Activated CD4-positive, alpha-beta T cell treated with anti-CD3 and anti-CD28 coated beads for 36 hours (primary cell): ENCODE measurements at regions of chr2 and their contacts with region 1.

Region 1: DNA sequence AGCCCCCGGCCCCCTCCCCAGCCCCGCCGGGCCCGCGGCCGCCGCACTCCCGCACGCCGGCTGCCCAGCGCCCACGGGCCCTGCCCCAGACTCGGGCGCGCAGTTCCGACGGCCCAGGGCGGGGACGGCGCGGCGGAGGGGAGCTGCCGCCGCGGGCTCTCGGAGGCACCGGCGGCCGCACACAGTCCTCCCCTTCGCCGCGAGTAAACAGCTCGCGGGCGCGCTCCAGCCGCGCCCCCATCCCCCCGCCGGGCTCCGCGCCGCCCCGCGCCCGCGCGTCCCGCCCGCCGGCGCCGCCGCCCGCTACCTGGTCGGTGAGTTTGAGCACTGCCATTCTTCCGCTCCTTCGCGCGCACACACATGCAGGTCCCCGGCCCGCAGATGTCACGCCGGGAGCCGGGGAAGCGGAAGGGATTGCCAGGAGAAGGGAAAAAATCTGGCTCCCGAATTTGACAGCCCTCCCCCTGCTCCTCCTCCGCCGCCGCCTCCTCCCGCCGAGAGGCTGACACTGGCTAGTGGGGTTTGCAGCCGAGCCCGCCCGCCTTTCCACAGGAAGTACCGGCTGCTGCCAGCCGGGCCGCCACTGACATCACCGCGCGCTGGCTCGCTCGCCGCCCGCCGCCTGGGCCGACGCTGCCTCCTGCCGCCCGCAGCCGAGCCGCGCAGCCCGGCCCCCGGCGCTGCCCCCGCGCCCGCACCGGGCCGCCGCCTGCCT is at the start of gene ANKRD44:
- DNase-seq: peak; percentile 93
- ATAC-seq: peak; percentile 69
- H3K4me3 Mint-ChIP-seq: peak within 1 kb of the TSS; percentile 93
- H3K27ac Mint-ChIP-seq: peak within 1 kb of the TSS; percentile 98
- H3K4me1 Mint-ChIP-seq: peaks cover 67% of the 10 kb centered on the region
- H3K27me3 Mint-ChIP-seq: no peaks in the 10 kb centered on the region
- total RNA-seq, gene ANKRD44: 122 to 181 TPM

Region 2: GRCh38 chr2:196160101-196160500 is 1150.3 kb before region 1 on chr2:
- CTCF ChIA-PET with region 1: no interaction called
- POLR2A ChIA-PET with region 1: no interaction called
- intact Hi-C with region 1: loop called in 1 of 2 experiments (anchors 10 kb)
- DNase-seq: peak; percentile 73
- ATAC-seq: peak; percentile 45
- H3K4me3 Mint-ChIP-seq: peak overlapping the region; percentile 56
- H3K27ac Mint-ChIP-seq: peak overlapping the region; percentile 90
- H3K4me1 Mint-ChIP-seq: peaks cover 76% of the 10 kb centered on the region
- H3K27me3 Mint-ChIP-seq: no peaks in the 10 kb centered on the region

Region 3: DNA sequence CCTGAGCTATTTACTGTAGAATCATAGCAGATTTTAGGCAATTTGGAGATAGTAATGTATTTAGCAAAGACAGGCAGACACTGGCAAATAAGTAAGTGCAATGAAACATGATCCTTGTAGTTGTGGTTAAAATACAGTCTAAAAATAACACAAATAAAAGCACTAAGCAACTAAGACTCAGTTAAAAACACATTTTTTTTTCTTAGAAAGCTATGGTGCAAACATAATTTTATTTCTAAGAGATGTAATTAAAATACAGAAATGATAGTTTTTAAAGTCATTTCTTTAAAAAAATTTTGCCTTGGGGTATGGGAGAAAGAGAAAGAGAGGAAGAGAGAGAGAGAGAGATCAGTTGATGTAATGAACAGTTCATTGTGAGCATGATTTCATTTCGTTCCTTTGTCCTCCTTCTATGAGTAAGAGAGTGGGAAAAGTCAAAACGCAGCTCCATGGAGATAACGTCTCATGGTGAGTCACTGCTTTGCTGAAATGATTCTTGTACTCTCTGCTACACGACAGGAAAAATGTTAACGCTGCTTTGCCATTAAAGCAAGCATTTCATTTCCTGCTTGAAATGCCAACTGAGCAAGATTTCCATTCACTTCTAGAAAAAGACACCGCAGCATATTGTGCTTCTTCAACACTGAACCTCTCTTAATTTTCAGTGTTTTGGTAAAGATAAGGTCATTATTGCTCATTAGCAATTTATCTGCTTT is 322.6 kb before region 1 on chr2:
- CTCF ChIA-PET with region 1: no interaction called
- POLR2A ChIA-PET with region 1: no interaction called
- intact Hi-C with region 1: loop called in 1 of 2 experiments (anchors 5 kb)
- DNase-seq: peak; percentile 62
- ATAC-seq: peak; percentile 93
- H3K4me3 Mint-ChIP-seq: peak overlapping the region; percentile 38
- H3K27ac Mint-ChIP-seq: peak overlapping the region; percentile 98
- H3K4me1 Mint-ChIP-seq: peaks cover 65% of the 10 kb centered on the region
- H3K27me3 Mint-ChIP-seq: no peaks in the 10 kb centered on the region

Region 4: DNA sequence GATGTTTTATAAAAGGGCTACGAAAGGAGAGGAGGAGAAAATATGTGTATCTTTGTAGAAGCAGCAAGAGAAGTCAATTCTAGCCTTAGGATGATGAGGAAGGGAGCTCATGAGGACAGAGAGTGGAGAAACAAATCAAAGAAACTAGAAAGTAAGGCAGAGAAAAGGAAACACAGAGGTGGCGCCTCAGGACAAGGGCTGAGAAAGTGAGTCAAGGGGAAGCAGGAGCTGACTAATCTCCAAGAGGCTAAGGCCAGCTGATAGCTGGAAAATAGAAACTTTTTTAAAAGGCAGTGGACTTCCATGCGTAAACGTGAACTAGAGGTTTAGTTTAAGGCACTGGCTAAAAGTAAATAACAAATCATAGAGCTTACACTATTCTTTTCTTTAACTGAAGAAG is 173.2 kb before region 1 on chr2:
- CTCF ChIA-PET with region 1: interaction called, 3 read pairs
- POLR2A ChIA-PET with region 1: no interaction called
- intact Hi-C with region 1: loop called in 1 of 2 experiments (anchors 5 kb)
- DNase-seq: peak; percentile 46
- ATAC-seq: peak; percentile 62
- H3K4me3 Mint-ChIP-seq: no peak overlapping the region
- H3K27ac Mint-ChIP-seq: peak overlapping the region; percentile 76
- H3K4me1 Mint-ChIP-seq: peaks cover 87% of the 10 kb centered on the region
- H3K27me3 Mint-ChIP-seq: no peaks in the 10 kb centered on the region

Region 5: DNA sequence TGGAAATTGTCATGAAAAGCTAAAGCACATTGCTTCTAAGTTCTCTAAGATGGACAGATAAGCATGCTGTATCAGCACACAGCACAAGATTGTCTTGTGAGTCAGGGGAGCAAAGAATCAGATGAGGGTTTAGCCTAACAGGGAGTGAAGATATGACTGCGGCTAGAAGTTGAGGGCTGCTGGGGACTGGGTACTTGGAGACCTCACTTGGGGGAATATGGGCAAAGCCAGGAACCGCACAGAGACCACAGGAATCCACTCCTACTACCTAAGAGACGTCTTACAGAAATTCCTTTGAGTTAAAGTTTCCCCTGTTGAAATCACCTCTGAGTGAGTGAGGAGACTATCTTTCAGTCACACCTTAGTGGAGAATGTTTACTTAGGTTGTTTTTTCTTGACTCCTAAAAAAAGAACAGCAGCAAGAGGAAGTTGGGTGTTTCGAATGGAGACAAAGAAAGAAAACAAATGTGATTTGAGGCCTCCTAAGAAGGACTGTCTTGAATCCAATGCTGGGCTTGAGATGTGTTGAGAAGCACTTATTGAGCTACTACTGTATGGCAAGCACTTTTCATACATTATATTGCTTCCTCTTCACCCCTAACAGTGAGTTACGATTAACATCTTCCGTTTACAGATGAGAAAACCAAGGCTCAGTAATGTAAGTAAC is 100.6 kb before region 1 on chr2:
- CTCF ChIA-PET with region 1: interaction called, 11 read pairs
- POLR2A ChIA-PET with region 1: interaction called, 6 read pairs
- intact Hi-C with region 1: loop called in 1 of 2 experiments (anchors 2 kb)
- DNase-seq: peak; percentile 82
- ATAC-seq: peak; percentile 64
- H3K4me3 Mint-ChIP-seq: peak overlapping the region; percentile 30
- H3K27ac Mint-ChIP-seq: peak overlapping the region; percentile 99
- H3K4me1 Mint-ChIP-seq: peaks cover 98% of the 10 kb centered on the region
- H3K27me3 Mint-ChIP-seq: no peaks in the 10 kb centered on the region

Region 6: DNA sequence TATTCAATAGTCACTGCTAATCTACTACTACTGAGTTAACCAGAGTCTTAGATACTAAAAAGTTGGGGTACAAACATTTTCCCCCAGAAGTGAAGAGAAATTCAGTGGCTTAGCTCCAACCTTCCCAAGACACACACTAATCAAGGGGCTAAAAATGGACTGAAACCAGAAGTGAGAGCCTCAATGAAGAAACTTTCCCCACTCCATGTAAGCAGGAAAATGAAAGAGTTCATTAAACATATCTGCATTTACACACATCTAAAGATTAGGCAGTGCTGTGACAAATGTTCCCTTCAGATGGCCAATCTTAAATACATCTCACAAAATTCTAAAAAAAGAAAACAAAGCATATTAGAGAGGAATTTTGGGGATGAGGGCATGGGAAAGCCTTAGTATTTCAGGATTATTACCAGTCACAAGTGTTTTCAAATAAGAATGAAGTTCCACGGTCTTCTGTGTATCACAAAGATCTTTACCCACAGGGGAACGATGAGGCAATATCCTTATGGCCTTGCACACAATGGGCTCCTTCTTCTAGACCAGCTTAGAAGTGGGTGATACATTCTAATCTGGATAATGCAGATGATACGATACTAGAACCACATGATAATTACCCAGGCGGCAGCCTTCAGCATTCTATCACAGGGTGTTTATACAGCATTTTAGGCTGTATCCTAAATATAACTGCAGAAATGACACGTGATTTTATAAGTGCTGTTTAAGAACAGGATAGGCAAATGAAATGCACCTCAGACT is 17.0 kb before region 1 on chr2:
- CTCF ChIA-PET with region 1: interaction called, 5 read pairs
- POLR2A ChIA-PET with region 1: interaction called, 4 read pairs
- intact Hi-C with region 1: loop called (anchors 1 to 2 kb)
- DNase-seq: peak; percentile 51
- ATAC-seq: peak; percentile 59
- H3K4me3 Mint-ChIP-seq: peak overlapping the region; percentile 67
- H3K27ac Mint-ChIP-seq: peak overlapping the region; percentile 93
- H3K4me1 Mint-ChIP-seq: peaks cover 92% of the 10 kb centered on the region
- H3K27me3 Mint-ChIP-seq: no peaks in the 10 kb centered on the region

Region 7: GRCh38 chr2:197453161-197453914 is 142.9 kb after region 1 on chr2 and contains the start of gene COQ10B:
- CTCF ChIA-PET with region 1: no interaction called
- POLR2A ChIA-PET with region 1: no interaction called
- intact Hi-C with region 1: no loop called
- DNase-seq: peak; percentile 99
- ATAC-seq: peak; percentile 93
- H3K4me3 Mint-ChIP-seq: peak within 1 kb of the TSS; percentile 90
- H3K27ac Mint-ChIP-seq: peak within 1 kb of the TSS; percentile 96
- H3K4me1 Mint-ChIP-seq: peaks cover 42% of the 10 kb centered on the region
- H3K27me3 Mint-ChIP-seq: no peaks in the 10 kb centered on the region
- total RNA-seq, gene COQ10B: 9.7 to 13.3 TPM

Region 8: GRCh38 chr2:197499594-197500526 is 189.4 kb after region 1 on chr2 and contains the starts of genes HSPD1 and HSPE1:
- CTCF ChIA-PET with region 1: no interaction called
- POLR2A ChIA-PET with region 1: no interaction called
- intact Hi-C with region 1: loop called in 1 of 2 experiments (anchors 1 kb)
- DNase-seq: peak; percentile 99
- ATAC-seq: peak; percentile 88
- H3K4me3 Mint-ChIP-seq: peak within 1 kb of the TSS; percentile 92
- H3K27ac Mint-ChIP-seq: peak within 1 kb of the TSS; percentile 97
- H3K4me1 Mint-ChIP-seq: peaks cover 57% of the 10 kb centered on the region
- H3K27me3 Mint-ChIP-seq: no peaks in the 10 kb centered on the region
- total RNA-seq, gene HSPD1: 872 to 1,138 TPM
- total RNA-seq, gene HSPE1: 250 to 356 TPM